ENCODE measurements at regions of chr4 and their contacts with region 1.

Region 1: GRCh38 chr4:56435306-56435926 is at the start of gene PPAT:
- DNase-seq: peak; percentile 98 to 99 (median 99)
- H3K4me3 ChIP-seq: peak within 1 kb of the TSS; percentile 76 to 82
- H3K4me3 Mint-ChIP-seq: peak within 1 kb of the TSS; percentile 90 to 99 (median 94)
- H3K27ac ChIP-seq: peak within 1 kb of the TSS; percentile 61
- H3K27ac Mint-ChIP-seq: peak within 1 kb of the TSS; percentile 87 to 98 (median 96)
- H3K4me1 ChIP-seq: peaks cover 26% of the 10 kb centered on the region
- H3K4me1 Mint-ChIP-seq: peaks cover 24 to 62% (median 39%) of the 10 kb centered on the region in 4 donors
- H3K27me3 ChIP-seq: no peaks in the 10 kb centered on the region
- H3K27me3 Mint-ChIP-seq: peaks cover 0 to 2% of the 10 kb centered on the region in 2 donors
- total RNA-seq, gene PPAT: 15.1 to 15.7 TPM

Region 2: GRCh38 chr4:55853484-55854046 is 581.9 kb before region 1 on chr4 and contains the start of gene EXOC1:
- CTCF ChIA-PET with region 1: no interaction called
- POLR2A ChIA-PET with region 1: no interaction called
- intact Hi-C with region 1: loop called (anchors 1 kb)
- DNase-seq: peak; percentile 93 to 96 (median 93)
- H3K4me3 ChIP-seq: peak within 1 kb of the TSS; percentile 83 to 97
- H3K4me3 Mint-ChIP-seq: peak within 1 kb of the TSS in 4 of 8 donors; percentile 40 to 67 (median 46)
- H3K27ac ChIP-seq: peak within 1 kb of the TSS; percentile 81
- H3K27ac Mint-ChIP-seq: peak within 1 kb of the TSS in 5 of 7 donors; percentile 36 to 96 (median 84)
- H3K4me1 ChIP-seq: peaks cover 44% of the 10 kb centered on the region
- H3K4me1 Mint-ChIP-seq: peaks cover 30 to 47% (median 38%) of the 10 kb centered on the region in 4 donors
- H3K27me3 ChIP-seq: no peaks in the 10 kb centered on the region
- H3K27me3 Mint-ChIP-seq: no peaks in the 10 kb centered on the region
- total RNA-seq, gene EXOC1: 41.9 to 50.7 TPM

Region 3: DNA sequence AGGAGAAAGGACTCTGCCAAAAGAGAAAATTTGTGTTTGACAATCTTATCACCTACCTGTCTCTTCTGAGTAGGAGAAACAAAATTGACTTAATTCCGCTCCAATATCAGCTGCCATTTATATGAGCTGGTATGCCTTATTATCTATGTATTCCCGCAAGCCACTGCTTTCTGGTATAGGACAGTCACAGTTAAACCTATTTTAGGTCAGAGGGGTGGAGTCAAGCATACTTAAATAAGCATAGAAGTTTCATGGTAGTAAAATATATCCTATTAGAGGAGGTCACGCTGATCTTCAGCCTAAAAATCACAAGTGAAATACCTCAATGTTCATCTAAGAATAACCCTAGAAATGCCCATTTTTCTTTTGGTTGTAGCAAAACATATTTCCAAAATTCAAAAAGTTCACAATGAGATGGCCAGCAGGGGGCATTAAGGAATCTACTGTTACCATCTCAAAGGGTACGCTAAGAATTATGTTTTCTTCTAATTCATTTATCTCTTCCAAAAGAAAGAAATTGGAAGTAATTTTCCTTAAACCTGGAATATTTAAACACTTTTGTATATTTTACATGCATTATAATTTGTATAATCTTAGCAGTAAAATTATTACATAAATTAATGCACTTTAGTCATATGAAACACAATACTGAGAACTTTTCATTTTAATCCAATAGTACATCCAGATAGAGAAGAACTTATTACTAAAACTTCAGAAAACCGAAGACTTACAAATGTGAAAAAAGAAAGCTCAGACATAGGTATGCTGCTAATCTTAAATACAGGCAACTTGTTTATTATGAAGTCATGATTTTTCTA is 10.5 kb before region 1 on chr4:
- CTCF ChIA-PET with region 1: interaction called, 81 read pairs
- POLR2A ChIA-PET with region 1: interaction called, 25 read pairs
- intact Hi-C with region 1: no loop called
- DNase-seq: peak in 4 of 5 donors; percentile 45 to 54 (median 48)
- H3K4me3 ChIP-seq: no peak overlapping the region
- H3K4me3 Mint-ChIP-seq: no peak overlapping the region
- H3K27ac ChIP-seq: no peak overlapping the region
- H3K27ac Mint-ChIP-seq: no peak overlapping the region
- H3K4me1 ChIP-seq: no peaks in the 10 kb centered on the region
- H3K4me1 Mint-ChIP-seq: peaks cover 0 to 7% (median 4%) of the 10 kb centered on the region in 4 donors
- H3K27me3 ChIP-seq: no peaks in the 10 kb centered on the region
- H3K27me3 Mint-ChIP-seq: no peaks in the 10 kb centered on the region

Region 4: DNA sequence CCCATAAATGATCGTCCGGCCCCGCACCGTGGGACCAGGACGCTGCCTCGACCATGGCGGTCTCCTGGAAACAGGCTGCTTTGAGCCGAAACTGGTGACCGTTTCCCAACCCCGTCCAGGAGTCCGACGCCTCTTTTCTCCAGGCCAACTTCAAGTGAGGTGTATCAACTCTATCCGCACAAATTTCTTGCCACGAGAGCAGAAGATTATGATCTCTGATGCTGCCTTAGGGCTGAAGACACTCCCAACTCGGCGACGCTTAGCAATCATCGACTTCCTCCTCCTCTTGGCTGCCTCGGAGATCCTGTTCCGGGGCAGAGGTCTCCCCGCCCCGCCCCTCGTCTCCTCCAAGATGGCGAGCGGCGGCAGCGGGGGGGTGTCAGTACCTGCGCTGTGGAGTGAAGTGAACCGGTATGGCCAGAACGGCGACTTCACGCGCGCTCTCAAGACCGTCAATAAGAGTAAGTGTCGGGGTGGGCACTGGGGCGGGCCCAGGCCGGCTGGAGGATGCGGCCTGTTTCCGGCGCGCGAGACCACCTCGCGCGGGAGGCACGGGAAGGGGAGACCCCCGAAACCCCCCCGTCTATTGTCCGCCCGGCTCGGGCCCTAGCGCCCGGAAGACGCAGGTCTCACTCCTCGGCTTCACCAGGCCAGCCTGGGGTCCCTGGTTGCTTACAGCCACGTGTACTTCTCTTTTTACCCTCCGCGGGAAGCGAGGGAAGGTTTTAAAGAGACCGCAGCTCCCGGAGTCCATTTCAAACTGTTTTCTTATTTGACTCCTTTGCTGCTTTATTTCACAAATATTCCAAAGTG is 32.1 kb after region 1 on chr4 and contains the start of gene SRP72:
- CTCF ChIA-PET with region 1: interaction called, 25 read pairs
- POLR2A ChIA-PET with region 1: interaction called, 76 read pairs
- intact Hi-C with region 1: loop called (anchors 1 kb)
- DNase-seq: peak; percentile 88 to 97 (median 89)
- H3K4me3 ChIP-seq: peak within 1 kb of the TSS; percentile 93 to 98
- H3K4me3 Mint-ChIP-seq: peak within 1 kb of the TSS; percentile 94 to 100 (median 98)
- H3K27ac ChIP-seq: peak within 1 kb of the TSS; percentile 90
- H3K27ac Mint-ChIP-seq: peak within 1 kb of the TSS; percentile 93 to 100 (median 98)
- H3K4me1 ChIP-seq: peaks cover 50% of the 10 kb centered on the region
- H3K4me1 Mint-ChIP-seq: peaks cover 39 to 64% (median 51%) of the 10 kb centered on the region in 4 donors
- H3K27me3 ChIP-seq: no peaks in the 10 kb centered on the region
- H3K27me3 Mint-ChIP-seq: no peaks in the 10 kb centered on the region
- total RNA-seq, gene SRP72: 104 to 107 TPM

Region 5: DNA sequence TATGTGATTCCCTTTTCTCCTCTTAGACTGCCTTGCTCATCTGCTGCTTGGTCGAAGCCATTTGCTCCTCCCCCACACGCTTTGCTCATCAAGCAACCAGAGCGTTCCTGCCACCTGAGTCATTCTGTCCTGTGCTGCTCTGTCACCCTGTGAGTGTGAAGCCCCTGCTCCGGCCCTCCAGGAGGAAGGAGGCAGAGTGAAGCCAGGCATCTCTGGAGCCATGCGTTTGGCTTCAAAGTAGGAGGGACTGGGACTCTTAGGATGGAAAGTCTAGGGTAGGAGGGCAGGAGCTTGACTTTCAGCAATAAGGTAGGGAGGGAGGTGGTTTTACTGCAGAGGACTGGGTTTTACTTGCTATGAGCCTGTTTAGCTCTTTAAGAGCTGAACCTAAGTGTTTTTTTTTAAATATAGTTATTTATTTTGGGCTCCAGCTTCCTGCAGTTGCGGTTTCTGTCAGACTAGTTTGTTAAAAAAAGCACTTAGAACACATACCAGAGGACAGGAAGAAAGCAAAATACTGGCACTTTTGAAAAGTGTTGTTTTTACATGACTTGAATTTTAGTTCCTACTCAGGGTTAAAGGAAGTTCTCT is 322.5 kb after region 1 on chr4:
- CTCF ChIA-PET with region 1: no interaction called
- POLR2A ChIA-PET with region 1: interaction called, 10 read pairs
- intact Hi-C with region 1: no loop called
- DNase-seq: peak; percentile 59 to 70 (median 69)
- H3K4me3 ChIP-seq: peak overlapping the region in 1 of 2 donors; percentile 18
- H3K4me3 Mint-ChIP-seq: peak overlapping the region; percentile 72 to 94 (median 85)
- H3K27ac ChIP-seq: peak overlapping the region; percentile 48
- H3K27ac Mint-ChIP-seq: peak overlapping the region; percentile 72 to 98 (median 94)
- H3K4me1 ChIP-seq: peaks cover 49% of the 10 kb centered on the region
- H3K4me1 Mint-ChIP-seq: peaks cover 38 to 73% (median 45%) of the 10 kb centered on the region in 4 donors
- H3K27me3 ChIP-seq: no peaks in the 10 kb centered on the region
- H3K27me3 Mint-ChIP-seq: no peaks in the 10 kb centered on the region

Region 6: GRCh38 chr4:56977321-56978012 is 542.1 kb after region 1 on chr4 and contains the start of gene NOA1:
- CTCF ChIA-PET with region 1: interaction called, 9 read pairs
- POLR2A ChIA-PET with region 1: interaction called, 53 read pairs
- intact Hi-C with region 1: loop called (anchors 1 kb)
- DNase-seq: peak; percentile 98 to 99 (median 99)
- H3K4me3 ChIP-seq: peak within 1 kb of the TSS; percentile 96 to 100
- H3K4me3 Mint-ChIP-seq: peak within 1 kb of the TSS; percentile 96 to 100 (median 99)
- H3K27ac ChIP-seq: peak within 1 kb of the TSS; percentile 85
- H3K27ac Mint-ChIP-seq: peak within 1 kb of the TSS; percentile 93 to 99 (median 98)
- H3K4me1 ChIP-seq: peaks cover 56% of the 10 kb centered on the region
- H3K4me1 Mint-ChIP-seq: peaks cover 28 to 79% (median 46%) of the 10 kb centered on the region in 4 donors
- H3K27me3 ChIP-seq: no peaks in the 10 kb centered on the region
- H3K27me3 Mint-ChIP-seq: no peaks in the 10 kb centered on the region
- total RNA-seq, gene NOA1: 20.1 to 20.4 TPM